Esophagus muscularis mucosa (tissue), 4 donors: ENCODE measurements at regions of chr12 and their contacts with region 1.

Region 1: GRCh38 chr12:113912760-113913329 is 53.3 kb downstream of the RBM19 start:
- DNase-seq: no peak
- H3K4me3 ChIP-seq: no peak overlapping the region
- H3K27ac ChIP-seq: no peak overlapping the region
- H3K4me1 ChIP-seq: no peaks in the 10 kb centered on the region
- H3K27me3 ChIP-seq: no peaks in the 10 kb centered on the region
- CTCF ChIP-seq: peak; percentile 69 to 85 (median 76)
- EP300 ChIP-seq: no peak
- POLR2A ChIP-seq: no peak

Region 2: GRCh38 chr12:113310489-113310888 is 602.4 kb before region 1 on chr12:
- intact Hi-C with region 1: loop called (anchors 10 kb)
- DNase-seq: no peak
- H3K4me3 ChIP-seq: no peak overlapping the region
- H3K27ac ChIP-seq: no peak overlapping the region
- H3K4me1 ChIP-seq: peaks cover 0 to 11% (median 5%) of the 10 kb centered on the region in 4 donors
- H3K27me3 ChIP-seq: no peaks in the 10 kb centered on the region
- CTCF ChIP-seq: no peak
- EP300 ChIP-seq: no peak
- POLR2A ChIP-seq: no peak

Region 3: DNA sequence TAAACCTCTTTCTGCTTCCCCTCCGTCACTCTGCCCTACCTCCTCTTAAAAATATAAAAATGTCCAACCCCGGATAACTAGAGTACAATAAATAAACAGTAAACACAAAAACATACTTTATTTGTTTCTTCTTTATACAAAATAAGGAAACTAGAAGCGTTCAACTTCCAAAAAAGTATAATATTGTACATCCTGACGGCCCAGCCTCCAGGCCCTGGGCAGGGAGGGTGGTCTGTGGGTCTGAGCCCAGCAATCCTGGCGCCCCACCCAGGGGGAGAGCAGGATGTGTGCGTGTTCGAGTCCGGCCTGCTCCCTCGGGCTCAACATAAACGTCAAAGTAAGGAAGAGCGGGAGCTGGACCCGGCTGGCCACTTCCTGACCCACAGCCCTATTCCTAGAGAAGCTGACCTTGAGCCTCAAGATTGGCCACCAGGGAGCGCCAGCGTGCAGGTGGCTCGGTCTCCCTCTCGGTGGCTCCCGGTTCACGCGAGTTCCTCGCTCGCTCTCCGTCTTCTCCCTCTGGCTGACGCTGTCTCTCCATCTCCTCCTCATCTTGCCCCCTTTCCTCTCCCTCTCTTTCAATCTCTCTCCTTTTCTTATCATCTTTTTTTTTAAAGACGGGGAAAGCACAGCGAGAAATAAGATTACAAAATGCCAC is 450.6 kb before region 1 on chr12:
- intact Hi-C with region 1: loop called (anchors 10 kb)
- DNase-seq: peak; percentile 94
- H3K4me3 ChIP-seq: peak overlapping the region; percentile 32 to 43 (median 38)
- H3K27ac ChIP-seq: no peak overlapping the region
- H3K4me1 ChIP-seq: peaks cover 32 to 52% (median 44%) of the 10 kb centered on the region in 4 donors
- H3K27me3 ChIP-seq: peaks cover 6 to 95% (median 56%) of the 10 kb centered on the region in 4 donors
- CTCF ChIP-seq: peak; percentile 51 to 88 (median 60)
- EP300 ChIP-seq: no peak
- POLR2A ChIP-seq: no peak